Activated CD8-positive, alpha-beta T cell treated with anti-CD3 and anti-CD28 coated beads for 36 hours (primary cell): ENCODE measurements at regions of chr12 and their contacts with region 1.

Region 1: GRCh38 chr12:93098077-93098476 is 169.0 kb upstream of the EEA1 start:
- DNase-seq: peak; percentile 86
- ATAC-seq: peak; percentile 83
- H3K4me3 Mint-ChIP-seq: no peak overlapping the region
- H3K27ac Mint-ChIP-seq: peak overlapping the region; percentile 11
- H3K4me1 Mint-ChIP-seq: peaks cover 18% of the 10 kb centered on the region
- H3K27me3 Mint-ChIP-seq: no peaks in the 10 kb centered on the region
- CTCF ChIP-seq: peak; percentile 73

Region 2: GRCh38 chr12:92796650-92797049 is 301.4 kb before region 1 on chr12:
- CTCF ChIA-PET with region 1: no interaction called
- POLR2A ChIA-PET with region 1: no interaction called
- intact Hi-C with region 1: no loop called
- DNase-seq: no peak
- ATAC-seq: no peak
- H3K4me3 Mint-ChIP-seq: no peak overlapping the region
- H3K27ac Mint-ChIP-seq: no peak overlapping the region
- H3K4me1 Mint-ChIP-seq: peaks cover 2% of the 10 kb centered on the region
- H3K27me3 Mint-ChIP-seq: no peaks in the 10 kb centered on the region
- CTCF ChIP-seq: no peak

Region 3: DNA sequence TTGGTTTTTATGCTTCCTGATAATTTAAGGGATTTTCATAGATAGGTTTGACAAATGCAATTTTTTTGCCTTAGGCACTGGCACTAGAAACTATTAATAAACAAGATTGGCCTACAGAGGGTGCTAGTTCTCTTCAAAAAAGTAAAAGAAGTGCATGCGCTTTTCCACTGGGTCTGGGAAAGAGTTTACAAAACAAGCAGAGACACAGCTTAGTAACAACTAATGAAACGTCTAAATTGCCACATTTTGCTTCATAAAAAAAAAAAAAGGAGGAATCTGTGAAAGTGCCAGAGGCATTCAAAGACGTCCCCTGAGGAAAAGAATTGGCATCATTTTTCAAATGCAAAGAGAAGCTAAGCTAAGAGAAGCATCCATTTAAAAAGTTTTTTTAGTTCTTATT is 110.7 kb before region 1 on chr12:
- CTCF ChIA-PET with region 1: interaction called, 28 read pairs
- POLR2A ChIA-PET with region 1: no interaction called
- intact Hi-C with region 1: loop called (anchors 5 kb)
- DNase-seq: peak; percentile 14
- ATAC-seq: no peak
- H3K4me3 Mint-ChIP-seq: no peak overlapping the region
- H3K27ac Mint-ChIP-seq: peak overlapping the region; percentile 78
- H3K4me1 Mint-ChIP-seq: peaks cover 37% of the 10 kb centered on the region
- H3K27me3 Mint-ChIP-seq: peaks cover 1% of the 10 kb centered on the region
- CTCF ChIP-seq: peak; percentile 81

Region 4: DNA sequence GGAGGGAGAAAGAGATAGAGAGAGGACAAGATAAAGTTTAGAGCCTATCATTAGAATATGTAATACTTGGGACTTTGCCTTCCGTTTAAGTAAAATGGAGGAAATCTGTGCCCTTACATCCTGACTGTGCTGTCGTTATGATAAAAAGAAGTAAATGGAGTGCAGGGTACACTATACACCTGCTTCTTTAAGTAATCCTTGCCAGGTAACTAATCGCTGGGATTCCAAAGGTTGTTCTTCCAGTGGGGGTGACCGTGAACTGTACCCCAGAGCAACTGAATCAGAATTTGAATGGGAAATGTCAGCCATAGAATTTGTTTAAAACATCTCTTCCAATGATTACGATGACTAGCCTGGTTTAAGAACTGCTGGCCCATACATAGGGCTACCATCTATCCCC is 42.9 kb before region 1 on chr12:
- CTCF ChIA-PET with region 1: no interaction called
- POLR2A ChIA-PET with region 1: no interaction called
- intact Hi-C with region 1: no loop called
- DNase-seq: no peak
- ATAC-seq: no peak
- H3K4me3 Mint-ChIP-seq: no peak overlapping the region
- H3K27ac Mint-ChIP-seq: no peak overlapping the region
- H3K4me1 Mint-ChIP-seq: peaks cover 5% of the 10 kb centered on the region
- H3K27me3 Mint-ChIP-seq: peaks cover 18% of the 10 kb centered on the region
- CTCF ChIP-seq: no peak

Region 5: DNA sequence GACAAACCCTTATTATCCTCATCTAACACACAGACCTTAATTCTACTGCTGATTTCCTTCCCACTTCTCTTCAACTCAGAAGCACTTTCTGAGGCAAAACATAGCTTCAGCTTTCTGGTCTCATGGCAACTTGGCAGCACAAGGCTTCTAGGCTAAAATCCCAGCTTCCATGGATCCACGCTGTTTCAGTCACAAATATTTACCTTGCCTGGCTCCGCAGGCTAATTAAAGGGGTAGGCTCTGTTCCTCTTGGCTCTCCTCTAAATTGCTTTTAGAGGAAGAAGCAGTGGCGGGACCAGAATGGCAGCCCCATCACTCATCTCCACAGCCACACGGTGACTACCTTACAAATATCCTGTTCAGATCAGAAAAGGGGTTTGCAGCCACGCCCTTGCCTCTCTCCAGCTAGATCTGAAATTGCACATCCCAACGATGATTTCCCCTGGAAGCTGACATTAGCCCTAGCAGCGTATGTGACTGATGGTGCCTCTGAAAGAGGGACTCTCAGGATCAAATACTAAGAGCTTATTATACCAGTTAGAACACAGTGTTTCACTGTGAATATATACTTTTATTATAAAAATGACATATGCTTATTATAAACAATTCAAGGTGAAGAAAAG is 58.1 kb after region 1 on chr12:
- CTCF ChIA-PET with region 1: interaction called, 10 read pairs
- POLR2A ChIA-PET with region 1: no interaction called
- intact Hi-C with region 1: no loop called
- DNase-seq: no peak
- ATAC-seq: no peak
- H3K4me3 Mint-ChIP-seq: no peak overlapping the region
- H3K27ac Mint-ChIP-seq: no peak overlapping the region
- H3K4me1 Mint-ChIP-seq: no peaks in the 10 kb centered on the region
- H3K27me3 Mint-ChIP-seq: peaks cover 2% of the 10 kb centered on the region
- CTCF ChIP-seq: no peak

Region 6: GRCh38 chr12:93378373-93379325 is 280.6 kb after region 1 on chr12:
- CTCF ChIA-PET with region 1: interaction called, 16 read pairs
- POLR2A ChIA-PET with region 1: interaction called, 3 read pairs
- intact Hi-C with region 1: loop called (anchors 10 kb)
- DNase-seq: peak; percentile 76
- ATAC-seq: peak; percentile 65
- H3K4me3 Mint-ChIP-seq: peak overlapping the region; percentile 92
- H3K27ac Mint-ChIP-seq: peak overlapping the region; percentile 99
- H3K4me1 Mint-ChIP-seq: peaks cover 37% of the 10 kb centered on the region
- H3K27me3 Mint-ChIP-seq: no peaks in the 10 kb centered on the region
- CTCF ChIP-seq: no peak

Region 7: DNA sequence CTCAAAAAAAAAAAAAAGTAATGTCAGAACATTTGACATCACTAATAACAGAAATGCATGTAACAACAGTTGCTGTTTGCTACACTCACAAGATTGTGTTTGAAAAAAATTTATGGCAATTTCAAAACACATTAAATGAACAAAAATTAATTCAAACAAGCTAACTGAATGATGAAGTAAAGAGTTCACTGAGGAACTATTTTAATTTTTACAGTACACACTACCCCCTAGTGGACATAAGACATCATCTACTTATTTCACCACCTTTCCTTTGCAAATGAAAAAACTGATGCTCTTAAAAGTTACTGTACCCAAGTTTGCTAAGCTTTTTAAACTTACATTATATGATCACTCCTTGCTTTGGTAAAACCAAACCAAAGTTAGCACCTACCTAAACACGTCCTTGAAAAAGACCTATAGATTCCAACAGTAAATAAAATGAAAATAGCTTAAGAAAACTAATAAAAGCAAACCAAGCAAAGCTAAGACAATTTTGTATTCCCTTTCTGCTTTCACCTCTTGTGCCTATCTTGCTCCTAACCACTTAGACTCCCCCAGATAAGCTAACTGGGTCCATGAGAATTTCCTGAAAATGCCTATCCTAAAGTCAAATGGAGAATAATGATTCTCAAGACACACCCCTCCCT is 321.4 kb after region 1 on chr12:
- CTCF ChIA-PET with region 1: interaction called, 17 read pairs
- POLR2A ChIA-PET with region 1: no interaction called
- intact Hi-C with region 1: loop called (anchors 10 kb)
- DNase-seq: no peak
- ATAC-seq: peak; percentile 56
- H3K4me3 Mint-ChIP-seq: no peak overlapping the region
- H3K27ac Mint-ChIP-seq: peak overlapping the region; percentile 31
- H3K4me1 Mint-ChIP-seq: peaks cover 85% of the 10 kb centered on the region
- H3K27me3 Mint-ChIP-seq: no peaks in the 10 kb centered on the region
- CTCF ChIP-seq: peak; percentile 78